ENCODE measurements at regions of chr11 and their contacts with region 1.

Region 1: GRCh38 chr11:130434521-130435223 is 6.3 kb upstream of the ADAMTS8 start:
- ATAC-seq: peak; percentile 76 to 93 (median 86)
- H3K4me3 ChIP-seq: peak overlapping the region; percentile 41 to 57 (median 49)
- H3K27ac ChIP-seq: no peak overlapping the region
- H3K4me1 ChIP-seq: no peaks in the 10 kb centered on the region

Region 2: DNA sequence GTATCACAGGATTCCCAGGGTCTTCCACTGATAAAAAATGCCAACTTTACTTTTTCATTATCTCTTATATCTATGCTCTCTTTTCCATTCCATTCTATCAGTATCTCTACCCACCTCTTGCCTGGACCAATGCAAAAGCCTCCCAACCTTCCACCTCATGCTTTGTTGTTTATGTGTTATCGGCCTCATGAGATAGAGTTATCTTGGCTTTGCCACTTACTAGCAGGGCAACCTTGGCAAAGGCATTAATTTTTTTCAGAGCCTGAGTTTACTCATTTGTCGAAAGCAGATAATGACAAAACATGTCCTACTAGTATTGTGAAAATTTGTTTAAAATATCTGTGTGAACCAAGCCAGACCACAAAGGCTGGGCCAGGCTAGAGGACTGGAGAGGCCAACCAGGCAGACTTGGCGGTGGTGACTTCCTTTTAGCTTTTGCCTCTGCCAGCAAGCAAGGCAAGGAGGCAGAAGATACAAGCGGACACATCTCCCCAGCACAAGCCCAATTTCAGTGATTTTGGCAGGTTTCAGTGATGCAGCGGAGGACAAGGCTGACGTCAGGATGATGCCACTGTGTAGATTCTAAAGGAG is 120.7 kb after region 1 on chr11:
- in situ Hi-C with region 1: no loop called
- ATAC-seq: no peak
- H3K4me3 ChIP-seq: no peak overlapping the region
- H3K27ac ChIP-seq: no peak overlapping the region
- H3K4me1 ChIP-seq: peaks cover 0 to 7% of the 10 kb centered on the region in 2 donors

Region 3: GRCh38 chr11:130671801-130672700 is 237.4 kb after region 1 on chr11:
- in situ Hi-C with region 1: loop called in 1 of 9 experiments (anchors 25 kb)
- ATAC-seq: peak; percentile 59 to 97 (median 88)
- H3K4me3 ChIP-seq: no peak overlapping the region
- H3K27ac ChIP-seq: no peak overlapping the region
- H3K4me1 ChIP-seq: peaks cover 10 to 13% of the 10 kb centered on the region in 2 donors